HAP-1 (cell line): ENCODE measurements at regions of chr6 and their contacts with region 1.

Region 1: GRCh38 chr6:73285674-73286283 is 22.8 kb upstream of the KHDC1 start:
- DNase-seq: peak in 1 of 2 experiments; percentile 36
- H3K4me3 ChIP-seq: no peak overlapping the region
- H3K4me1 ChIP-seq: no peaks in the 10 kb centered on the region; the same call in 1 of the 2 replicates
- H3K27me3 ChIP-seq: no peaks in the 10 kb centered on the region

Region 2: GRCh38 chr6:73200735-73201134 is 85.0 kb before region 1 on chr6:
- in situ Hi-C with region 1: no loop called
- DNase-seq: no peak
- H3K4me3 ChIP-seq: no peak overlapping the region
- H3K4me1 ChIP-seq: no peaks in the 10 kb centered on the region
- H3K27me3 ChIP-seq: no peaks in the 10 kb centered on the region; the same call in 1 of the 2 replicates

Region 3: GRCh38 chr6:73610444-73611275 is 324.9 kb after region 1 on chr6:
- in situ Hi-C with region 1: loop called (anchors 25 kb)
- DNase-seq: peak in 1 of 2 experiments; percentile 41
- H3K4me3 ChIP-seq: no peak overlapping the region
- H3K4me1 ChIP-seq: no peaks in the 10 kb centered on the region
- H3K27me3 ChIP-seq: no peaks in the 10 kb centered on the region

Region 4: DNA sequence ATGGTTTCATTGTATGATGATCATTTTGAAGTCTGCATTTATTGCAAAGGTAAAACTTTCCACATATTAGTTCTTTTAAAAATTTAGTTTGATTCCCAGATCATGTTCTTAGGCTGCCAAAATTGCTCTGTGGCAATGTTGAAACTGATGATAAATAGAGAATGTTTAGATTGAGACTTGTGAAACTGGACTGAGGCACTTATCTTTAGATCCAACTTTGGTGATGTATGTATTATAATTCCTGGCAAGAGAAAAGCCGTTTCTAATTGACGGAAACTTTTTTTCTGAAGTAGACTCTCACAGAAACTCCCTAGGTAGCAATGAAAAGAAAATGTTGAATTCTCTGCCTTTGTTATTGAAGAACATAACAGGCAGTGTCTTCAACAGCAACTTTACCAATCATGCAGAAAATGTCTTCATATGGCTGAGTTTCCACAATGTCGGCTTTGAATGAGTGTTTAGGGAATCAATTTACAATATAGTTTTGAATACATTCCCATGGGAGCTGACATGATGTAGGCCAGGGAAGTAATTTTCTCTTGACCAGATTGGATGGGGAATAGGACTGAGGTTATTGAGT is 866.4 kb after region 1 on chr6:
- in situ Hi-C with region 1: no loop called
- DNase-seq: no peak
- H3K4me3 ChIP-seq: no peak overlapping the region
- H3K4me1 ChIP-seq: no peaks in the 10 kb centered on the region
- H3K27me3 ChIP-seq: no peaks in the 10 kb centered on the region